Heart left ventricle (tissue), 16 donors: ENCODE measurements at regions of chr20 and their contacts with region 1.

Region 1: DNA sequence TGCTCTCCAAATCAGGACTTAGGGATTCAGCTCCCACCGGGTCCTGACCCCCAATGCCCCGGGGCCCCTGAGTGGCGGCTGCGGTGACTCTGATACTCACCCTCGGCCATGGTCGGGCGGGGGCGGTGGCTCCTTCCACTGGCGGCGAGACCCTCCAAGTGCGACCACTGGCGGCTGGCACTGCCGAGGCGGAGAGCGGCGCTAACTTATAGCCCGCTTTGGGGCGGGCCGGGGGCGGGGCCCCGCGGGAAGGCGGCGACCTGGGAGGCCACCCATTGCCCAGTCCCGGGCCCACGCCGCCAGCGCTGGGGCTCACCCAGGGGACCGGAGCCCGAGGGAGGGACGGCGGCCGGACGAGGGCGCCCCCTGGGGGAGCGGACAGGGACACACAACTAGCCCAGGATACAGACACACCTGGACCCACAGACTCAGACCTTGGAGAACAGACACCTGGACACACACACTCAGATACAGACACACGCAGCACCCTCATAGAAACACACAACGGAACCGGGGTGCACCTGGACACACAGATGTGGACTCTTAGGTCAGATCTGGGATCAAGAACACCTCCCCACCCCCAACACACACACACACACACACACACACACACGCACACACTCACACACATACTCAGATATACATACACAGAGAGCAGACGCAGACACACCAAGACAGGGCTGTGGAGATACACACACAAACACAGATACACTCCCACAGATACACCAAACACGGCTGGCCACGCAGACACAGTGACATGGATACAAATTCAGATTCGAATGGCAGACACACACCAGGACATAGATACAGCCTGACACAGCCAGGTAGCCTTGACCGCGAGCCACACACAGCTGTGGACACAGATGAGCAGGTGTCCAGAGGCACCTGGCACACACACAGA is at the start of gene TGM2:
- DNase-seq: peak; percentile 84 to 92 (median 91)
- ATAC-seq: peak; percentile 82 to 90 (median 86)
- H3K4me3 ChIP-seq: peak within 1 kb of the TSS; percentile 49 to 81 (median 70)
- H3K27ac ChIP-seq: peak within 1 kb of the TSS; percentile 76 to 96 (median 86)
- H3K4me1 ChIP-seq: peaks cover 0 to 85% (median 50%) of the 10 kb centered on the region in 12 donors
- H3K27me3 ChIP-seq: no peaks in the 10 kb centered on the region
- CTCF ChIP-seq: peak; percentile 79 to 94 (median 89)
- POLR2A ChIP-seq: peak; percentile 63 to 90
- total RNA-seq, gene TGM2: 271 to 1,146 (median 567) TPM

Region 2: DNA sequence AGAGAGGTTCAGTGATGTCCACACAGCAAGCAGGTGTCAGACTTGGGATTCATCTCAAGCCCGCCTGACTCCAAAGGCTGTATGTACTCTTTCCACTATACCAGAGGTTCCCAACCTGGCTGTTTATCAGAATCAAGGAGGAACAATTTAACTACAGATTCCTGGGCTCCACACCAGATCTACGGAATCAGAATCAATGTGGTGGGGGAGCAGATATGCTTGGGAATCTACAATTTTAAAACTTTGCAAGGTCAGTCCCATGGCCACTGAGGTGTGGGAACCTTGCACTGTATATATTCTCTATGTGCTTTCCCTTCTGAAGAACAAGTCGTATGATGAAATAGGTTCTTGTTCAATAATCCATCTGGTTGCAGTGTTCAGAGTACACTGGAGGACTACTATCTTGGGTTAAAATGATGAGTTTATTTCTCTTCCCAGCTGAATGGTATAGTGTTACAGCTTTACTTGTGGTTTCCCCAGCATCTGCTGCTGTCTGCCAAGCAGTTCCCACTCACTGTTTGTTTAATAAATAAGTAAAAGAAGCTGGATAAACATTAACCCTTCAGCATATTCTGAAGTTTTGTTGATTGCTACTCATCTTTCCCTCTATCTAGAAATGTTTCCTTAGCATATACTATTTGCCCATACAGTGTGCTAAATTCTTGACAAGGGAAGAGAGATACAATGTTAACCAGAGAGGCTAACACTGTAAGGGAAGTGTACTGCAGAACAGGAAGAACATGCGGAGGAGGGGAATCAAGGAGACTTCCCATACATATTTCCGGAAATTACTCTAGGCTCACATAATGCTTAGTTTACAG is 141.9 kb before region 1 on chr20:
- intact Hi-C with region 1: no loop called
- DNase-seq: no peak
- ATAC-seq: peak in 2 of 4 donors; percentile 45 to 49
- H3K4me3 ChIP-seq: no peak overlapping the region
- H3K27ac ChIP-seq: peak overlapping the region in 1 of 12 donors; percentile 77
- H3K4me1 ChIP-seq: peaks cover 0 to 23% (median 2%) of the 10 kb centered on the region in 12 donors
- H3K27me3 ChIP-seq: no peaks in the 10 kb centered on the region
- CTCF ChIP-seq: no peak
- POLR2A ChIP-seq: no peak

Region 3: GRCh38 chr20:38057351-38057972 is 107.9 kb before region 1 on chr20:
- intact Hi-C with region 1: loop called in 9 of 10 experiments (anchors 1 to 5 kb)
- DNase-seq: peak; percentile 80 to 93 (median 84)
- ATAC-seq: peak; percentile 70 to 93 (median 90)
- H3K4me3 ChIP-seq: no peak overlapping the region
- H3K27ac ChIP-seq: peak overlapping the region in 3 of 12 donors; percentile 13 to 42 (median 19)
- H3K4me1 ChIP-seq: peaks cover 0 to 31% (median 9%) of the 10 kb centered on the region in 12 donors
- H3K27me3 ChIP-seq: no peaks in the 10 kb centered on the region
- CTCF ChIP-seq: peak; percentile 85 to 96 (median 91)
- POLR2A ChIP-seq: no peak

Region 4: GRCh38 chr20:38073307-38074071 is 91.8 kb before region 1 on chr20:
- intact Hi-C with region 1: loop called (anchors 1 to 5 kb)
- DNase-seq: peak in 4 of 5 donors; percentile 69 to 85 (median 74)
- ATAC-seq: peak; percentile 72 to 88 (median 83)
- H3K4me3 ChIP-seq: no peak overlapping the region
- H3K27ac ChIP-seq: peak overlapping the region; percentile 45 to 90 (median 83)
- H3K4me1 ChIP-seq: peaks cover 22 to 58% (median 40%) of the 10 kb centered on the region in 12 donors
- H3K27me3 ChIP-seq: no peaks in the 10 kb centered on the region
- CTCF ChIP-seq: peak; percentile 72 to 92 (median 80)
- POLR2A ChIP-seq: no peak

Region 5: DNA sequence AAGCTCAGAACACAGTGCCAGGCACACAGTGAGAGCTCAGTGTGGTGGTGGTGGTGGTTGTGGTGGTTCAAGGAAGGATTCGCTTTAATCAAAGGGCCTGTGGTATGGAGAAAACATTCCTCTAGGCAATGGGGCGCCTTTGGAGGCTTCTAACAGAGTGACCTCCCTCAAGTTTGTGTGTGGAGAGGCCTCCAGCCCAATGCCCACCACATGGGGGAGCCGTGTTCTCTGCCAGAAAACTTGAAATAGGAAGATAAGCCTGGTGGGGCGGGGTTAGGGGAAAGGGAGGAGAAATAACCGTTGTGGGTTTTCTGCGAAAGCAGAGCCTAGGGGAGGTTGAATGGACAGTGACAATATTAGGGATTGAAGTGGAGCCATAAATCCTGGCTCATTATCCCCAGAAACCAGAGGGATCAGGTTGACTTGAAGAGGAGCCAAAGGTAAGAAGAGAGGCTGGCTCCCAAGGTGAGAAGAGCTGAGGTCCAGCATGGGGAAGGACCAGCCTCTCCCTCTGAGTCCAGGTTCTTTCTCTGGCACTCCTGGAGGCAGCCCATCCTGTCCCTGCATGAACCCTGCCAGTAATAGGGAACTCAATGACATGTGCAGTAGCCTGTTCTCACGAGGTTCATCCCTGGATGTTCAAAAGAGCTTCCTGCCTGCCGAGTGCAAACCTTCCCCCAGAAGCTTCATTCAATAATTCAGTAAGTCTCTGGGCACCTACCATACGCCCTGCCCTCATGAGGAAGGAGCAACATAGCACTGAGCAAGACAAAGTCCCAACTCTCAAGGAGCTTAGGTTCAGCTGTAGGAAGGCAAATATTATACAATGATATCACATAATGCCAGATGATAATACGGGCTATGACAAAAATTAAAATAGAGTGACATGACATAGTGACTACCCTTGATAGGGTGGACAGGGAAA is 51.7 kb before region 1 on chr20:
- intact Hi-C with region 1: loop called in 5 of 10 experiments (anchors 1 to 10 kb)
- DNase-seq: peak in 1 of 5 donors; percentile 38
- ATAC-seq: no peak
- H3K4me3 ChIP-seq: no peak overlapping the region
- H3K27ac ChIP-seq: peak overlapping the region in 8 of 12 donors; percentile 4 to 62 (median 26)
- H3K4me1 ChIP-seq: peaks cover 13 to 54% (median 42%) of the 10 kb centered on the region in 12 donors
- H3K27me3 ChIP-seq: no peaks in the 10 kb centered on the region
- CTCF ChIP-seq: peak in 9 of 12 donors; percentile 8 to 41 (median 19)
- POLR2A ChIP-seq: no peak

Region 6: GRCh38 chr20:38127011-38127621 is 38.2 kb before region 1 on chr20:
- intact Hi-C with region 1: loop called in 2 of 10 experiments (anchors 5 kb)
- DNase-seq: peak in 2 of 5 donors; percentile 55 to 69
- ATAC-seq: peak; percentile 69 to 82 (median 74)
- H3K4me3 ChIP-seq: peak overlapping the region in 1 of 12 donors; percentile 4
- H3K27ac ChIP-seq: peak overlapping the region; percentile 78 to 94 (median 84)
- H3K4me1 ChIP-seq: peaks cover 8 to 53% (median 33%) of the 10 kb centered on the region in 12 donors
- H3K27me3 ChIP-seq: no peaks in the 10 kb centered on the region
- CTCF ChIP-seq: peak in 1 of 12 donors; percentile 10
- POLR2A ChIP-seq: no peak